Naive thymus-derived CD4-positive, alpha-beta T cell (primary cell): ENCODE measurements at regions of chr19 and their contacts with region 1.

Region 1: DNA sequence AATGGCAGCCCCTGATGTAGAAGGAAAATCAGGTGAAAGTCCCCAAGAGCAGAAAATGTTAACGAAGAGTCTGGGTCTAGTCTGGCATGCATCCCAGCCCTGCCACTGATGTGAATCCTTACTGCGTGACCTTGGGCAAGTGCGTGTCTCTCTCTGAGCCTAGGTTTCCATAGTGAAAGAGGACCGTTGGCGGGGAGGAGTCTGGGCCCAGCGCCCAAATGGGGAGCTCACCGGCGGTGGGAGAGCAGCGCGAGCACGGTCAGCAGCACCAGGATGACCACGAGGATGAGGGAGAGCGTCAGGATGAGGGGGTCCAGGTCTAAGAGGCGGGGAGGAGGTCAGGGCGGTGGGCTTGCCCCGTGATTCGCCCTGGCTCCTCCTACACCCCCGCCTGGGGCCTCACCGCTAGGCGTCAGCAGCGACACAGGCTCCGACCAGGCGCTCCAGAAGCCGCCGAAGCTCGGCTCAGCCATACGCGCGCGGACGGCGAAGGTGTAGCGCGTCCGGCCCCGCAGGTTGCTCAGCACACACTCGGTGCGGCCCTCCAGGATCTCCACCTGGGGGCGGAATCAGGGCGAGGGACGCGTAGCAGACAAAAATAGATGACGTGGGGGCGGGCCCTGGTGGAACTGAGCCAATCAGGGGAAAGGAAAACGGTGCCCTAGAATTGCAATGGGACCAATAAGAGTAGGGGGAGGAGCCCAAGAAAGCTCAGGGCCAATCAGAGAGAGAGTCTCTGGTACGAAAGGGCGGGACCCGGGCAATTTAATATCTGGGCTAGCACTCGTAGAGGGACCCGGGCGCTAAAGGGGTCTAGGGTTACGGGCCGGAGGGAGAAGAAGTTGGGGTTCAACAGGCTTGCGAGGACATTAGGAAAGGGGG is 3.2 kb downstream of the EPOR start:
- DNase-seq: peak; percentile 88 to 99 (median 98)
- ATAC-seq: peak; percentile 90
- H3K4me3 ChIP-seq: peak overlapping the region; percentile 69
- H3K4me3 Mint-ChIP-seq: peak overlapping the region; percentile 86 to 99 (median 93)
- H3K27ac ChIP-seq: peak overlapping the region; percentile 86
- H3K27ac Mint-ChIP-seq: peak overlapping the region; percentile 91 to 99 (median 98)
- H3K4me1 ChIP-seq: peaks cover 33 to 44% of the 10 kb centered on the region in 2 donors
- H3K4me1 Mint-ChIP-seq: peaks cover 36 to 65% (median 52%) of the 10 kb centered on the region in 7 donors
- H3K27me3 ChIP-seq: no peaks in the 10 kb centered on the region
- H3K27me3 Mint-ChIP-seq: peaks cover 0 to 35% (median 5%) of the 10 kb centered on the region in 5 donors

Region 2: DNA sequence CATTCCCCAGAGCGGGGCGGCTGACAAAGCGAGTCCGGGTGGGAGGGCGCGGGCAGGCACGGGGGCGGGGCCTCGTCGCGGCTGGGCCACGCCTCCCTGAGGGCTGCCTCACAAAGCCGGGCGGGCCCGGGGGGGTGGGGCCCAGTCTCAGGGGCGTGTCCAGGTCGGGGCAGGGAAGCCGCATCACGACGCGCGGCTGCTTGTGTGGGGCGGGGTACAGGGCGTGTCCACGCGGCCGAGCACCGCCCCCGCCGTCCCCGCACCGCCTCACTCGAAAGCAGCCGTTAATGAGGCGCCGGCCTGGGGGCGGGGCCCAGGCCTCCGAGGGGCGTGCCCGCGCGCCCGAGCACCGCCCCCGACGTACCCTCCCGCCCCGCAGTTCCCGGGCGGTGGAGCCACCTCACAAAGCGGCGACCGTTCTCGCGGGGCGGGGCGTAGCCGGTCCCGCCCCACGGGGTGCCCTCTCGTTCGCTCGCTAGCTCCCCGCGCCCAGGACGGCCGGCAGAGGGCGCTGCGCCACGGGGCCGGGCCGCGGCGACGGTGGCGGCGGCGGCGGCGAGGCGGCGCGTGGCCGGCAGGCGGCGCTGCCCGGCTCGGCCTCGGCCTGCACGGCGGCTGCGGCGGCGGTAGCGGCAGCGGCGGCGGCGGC is 509.8 kb before region 1 on chr19 and contains the start of gene CARM1:
- CTCF ChIA-PET with region 1: no interaction called
- POLR2A ChIA-PET with region 1: no interaction called
- intact Hi-C with region 1: loop called in 1 of 2 experiments (anchors 10 kb)
- DNase-seq: peak; percentile 99 to 100 (median 99)
- ATAC-seq: peak; percentile 92
- H3K4me3 ChIP-seq: peak within 1 kb of the TSS; percentile 67
- H3K4me3 Mint-ChIP-seq: peak within 1 kb of the TSS; percentile 79 to 91 (median 86)
- H3K27ac ChIP-seq: peak within 1 kb of the TSS; percentile 74
- H3K27ac Mint-ChIP-seq: peak within 1 kb of the TSS; percentile 74 to 96 (median 88)
- H3K4me1 ChIP-seq: peaks cover 10 to 14% of the 10 kb centered on the region in 2 donors
- H3K4me1 Mint-ChIP-seq: peaks cover 5 to 33% (median 25%) of the 10 kb centered on the region in 7 donors
- H3K27me3 ChIP-seq: no peaks in the 10 kb centered on the region
- H3K27me3 Mint-ChIP-seq: no peaks in the 10 kb centered on the region
- total RNA-seq, gene CARM1: 21.3 to 43.1 (median 27.2) TPM

Region 3: DNA sequence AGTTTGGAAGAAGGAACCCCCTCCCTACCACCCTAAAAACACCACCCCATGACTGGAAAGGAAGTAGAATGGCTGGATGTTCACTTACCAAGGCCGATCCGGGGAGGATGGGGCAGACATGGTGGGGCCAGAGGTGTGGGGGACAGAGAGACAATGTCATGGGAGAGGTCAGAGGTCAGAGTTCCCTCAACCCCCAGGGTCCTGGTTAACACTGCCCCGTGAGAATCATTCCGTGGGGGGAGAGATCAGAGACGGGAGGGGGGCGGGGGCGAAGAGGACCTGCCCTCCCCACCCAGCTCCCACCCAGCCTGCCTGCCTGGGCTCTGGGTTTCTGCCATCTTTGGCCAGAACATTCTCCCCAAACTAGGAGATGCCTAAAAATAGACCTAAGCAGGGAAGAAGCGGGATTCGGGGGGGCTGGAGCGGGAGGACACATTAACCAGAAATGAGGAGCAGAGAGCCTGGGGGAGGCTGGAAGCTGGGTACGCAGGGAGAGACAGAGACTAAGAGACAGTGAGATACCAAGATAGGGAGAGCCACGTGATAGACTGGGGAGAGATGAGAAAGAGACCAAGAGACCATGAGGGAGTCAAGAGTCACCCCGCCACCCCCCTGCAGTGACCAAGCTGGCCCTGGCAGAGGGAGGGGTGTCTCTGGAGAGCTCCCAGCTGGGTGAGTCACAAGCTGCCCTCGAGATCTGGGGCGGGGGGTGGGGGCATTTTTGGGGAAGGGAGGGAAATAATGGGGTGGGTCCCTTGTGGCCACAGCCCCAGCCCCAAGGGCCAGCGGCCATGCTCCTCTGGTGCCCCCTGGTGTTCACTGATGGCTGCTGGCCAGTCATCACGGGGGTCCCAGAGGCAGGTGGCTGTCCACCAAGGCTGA is 177.5 kb before region 1 on chr19:
- CTCF ChIA-PET with region 1: no interaction called
- POLR2A ChIA-PET with region 1: no interaction called
- intact Hi-C with region 1: no loop called
- DNase-seq: peak in 4 of 9 donors; percentile 7 to 44 (median 21)
- ATAC-seq: peak; percentile 65
- H3K4me3 ChIP-seq: no peak overlapping the region
- H3K4me3 Mint-ChIP-seq: no peak overlapping the region
- H3K27ac ChIP-seq: no peak overlapping the region
- H3K27ac Mint-ChIP-seq: no peak overlapping the region
- H3K4me1 ChIP-seq: no peaks in the 10 kb centered on the region
- H3K4me1 Mint-ChIP-seq: peaks cover 0 to 3% (median 0%) of the 10 kb centered on the region in 7 donors
- H3K27me3 ChIP-seq: no peaks in the 10 kb centered on the region
- H3K27me3 Mint-ChIP-seq: peaks cover 0 to 19% (median 7%) of the 10 kb centered on the region in 5 donors

Region 4: DNA sequence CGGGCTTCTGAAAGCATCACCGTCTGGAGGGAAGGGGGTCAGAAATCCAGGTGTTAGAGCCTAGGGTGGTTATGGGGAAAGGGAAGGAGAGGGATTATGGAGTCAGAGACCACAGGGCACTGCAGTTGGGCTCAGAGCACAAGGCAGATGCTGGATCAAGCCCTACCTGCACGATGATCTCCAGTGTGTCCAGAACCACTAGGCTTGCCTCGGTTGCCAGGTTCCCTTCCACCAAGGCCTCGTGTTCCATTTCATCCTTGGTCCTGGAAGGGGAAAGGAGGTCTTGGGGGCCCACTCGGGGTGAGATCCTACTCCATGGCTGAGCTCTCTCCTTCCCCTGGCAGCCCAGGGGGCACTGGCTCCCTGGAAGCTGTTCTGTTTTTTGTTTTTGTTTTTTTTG is 166.5 kb before region 1 on chr19:
- CTCF ChIA-PET with region 1: no interaction called
- POLR2A ChIA-PET with region 1: no interaction called
- intact Hi-C with region 1: no loop called
- DNase-seq: no peak
- ATAC-seq: no peak
- H3K4me3 ChIP-seq: no peak overlapping the region
- H3K4me3 Mint-ChIP-seq: no peak overlapping the region
- H3K27ac ChIP-seq: no peak overlapping the region
- H3K27ac Mint-ChIP-seq: no peak overlapping the region
- H3K4me1 ChIP-seq: no peaks in the 10 kb centered on the region
- H3K4me1 Mint-ChIP-seq: peaks cover 0 to 2% (median 0%) of the 10 kb centered on the region in 7 donors
- H3K27me3 ChIP-seq: no peaks in the 10 kb centered on the region
- H3K27me3 Mint-ChIP-seq: peaks cover 0 to 4% (median 0%) of the 10 kb centered on the region in 5 donors

Region 5: DNA sequence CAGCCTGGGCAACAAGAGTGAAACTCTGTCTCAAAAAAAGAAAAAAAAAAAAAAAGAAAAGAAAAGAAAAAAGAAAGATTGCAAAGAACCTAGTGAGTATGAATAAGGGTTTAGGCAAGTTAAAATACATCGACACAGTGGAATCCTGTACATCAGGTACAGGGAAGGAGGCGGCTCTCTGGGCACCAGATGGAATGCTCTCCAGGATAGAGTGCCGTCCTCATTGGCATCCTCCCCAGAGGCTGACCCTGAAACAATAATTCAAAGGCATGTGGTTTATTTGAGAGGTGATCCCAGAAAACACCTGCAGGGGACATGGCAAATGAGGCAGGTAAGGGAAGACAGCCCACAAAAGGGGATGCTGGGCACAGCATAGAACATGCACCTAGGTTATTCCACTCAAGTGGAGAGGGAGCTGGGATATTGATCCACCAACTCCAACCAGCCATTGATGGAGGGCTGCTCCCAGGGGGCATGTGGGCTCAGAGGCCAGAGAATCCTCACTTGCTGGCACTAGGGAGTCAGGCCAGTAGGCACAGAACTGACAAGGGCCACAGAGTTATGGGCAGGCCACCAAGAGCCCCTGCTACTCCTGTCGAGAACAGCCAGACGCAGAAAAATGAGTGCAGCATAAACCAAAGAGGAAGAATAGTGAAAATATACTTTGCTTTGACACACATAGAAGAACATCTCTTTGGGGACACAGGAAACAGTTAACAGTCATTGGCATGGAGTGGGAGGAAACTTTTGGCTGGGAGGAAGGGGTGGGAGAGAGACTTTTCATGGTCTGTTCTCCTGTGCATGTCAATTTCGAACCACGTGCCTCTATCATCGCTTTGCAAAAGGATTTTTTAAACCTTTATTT is 80.7 kb before region 1 on chr19:
- CTCF ChIA-PET with region 1: no interaction called
- POLR2A ChIA-PET with region 1: no interaction called
- intact Hi-C with region 1: no loop called
- DNase-seq: no peak
- ATAC-seq: no peak
- H3K4me3 ChIP-seq: no peak overlapping the region
- H3K4me3 Mint-ChIP-seq: no peak overlapping the region
- H3K27ac ChIP-seq: no peak overlapping the region
- H3K27ac Mint-ChIP-seq: no peak overlapping the region
- H3K4me1 ChIP-seq: no peaks in the 10 kb centered on the region
- H3K4me1 Mint-ChIP-seq: no peaks in the 10 kb centered on the region
- H3K27me3 ChIP-seq: no peaks in the 10 kb centered on the region
- H3K27me3 Mint-ChIP-seq: peaks cover 0 to 39% (median 9%) of the 10 kb centered on the region in 5 donors

Region 6: DNA sequence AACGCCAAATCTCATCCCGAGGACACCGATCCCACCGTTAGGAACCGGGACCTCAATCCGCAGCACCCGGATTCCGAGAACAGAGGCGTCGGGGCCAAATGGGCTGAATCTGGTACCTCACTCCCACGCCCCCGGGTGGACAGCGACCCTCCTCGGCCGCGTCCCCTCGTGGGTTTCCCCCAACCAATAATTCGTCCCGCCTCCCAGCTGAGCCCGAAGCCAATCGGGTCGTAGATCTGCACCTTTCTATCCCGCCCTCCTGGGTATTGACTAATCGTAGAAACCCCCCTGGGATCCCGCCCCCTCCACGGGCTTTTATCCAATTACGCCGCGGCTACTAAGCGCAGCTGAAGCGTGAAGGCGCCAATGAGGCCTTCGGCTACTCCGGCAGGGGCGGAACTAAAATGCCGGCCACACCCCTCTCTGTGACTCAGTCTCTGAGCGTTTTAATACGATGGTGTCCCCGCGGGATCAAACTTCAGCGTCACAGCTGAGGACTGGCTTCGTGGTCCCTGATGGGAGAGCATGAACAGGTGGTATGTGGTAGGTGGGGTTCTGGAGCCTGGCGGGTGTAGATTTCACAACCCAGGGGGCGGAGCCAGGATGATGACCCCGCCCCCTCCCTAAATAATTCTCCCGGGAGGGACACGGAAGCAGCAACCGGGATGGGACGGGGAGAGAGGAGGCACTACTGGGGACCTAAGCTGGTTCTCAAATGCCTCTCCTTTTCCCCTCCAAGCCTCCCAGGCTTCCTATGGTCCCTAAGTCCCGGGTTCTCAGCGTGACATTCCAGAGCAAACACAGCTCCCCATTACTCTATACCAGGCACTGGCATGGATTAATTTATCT is 34.6 kb before region 1 on chr19 and contains the starts of genes CCDC159 and TMEM205:
- CTCF ChIA-PET with region 1: interaction called, 13 read pairs
- POLR2A ChIA-PET with region 1: interaction called, 36 read pairs
- intact Hi-C with region 1: loop called in 1 of 2 experiments (anchors 1 kb)
- DNase-seq: peak; percentile 82 to 99 (median 98)
- ATAC-seq: peak; percentile 98
- H3K4me3 ChIP-seq: peak within 1 kb of the TSS; percentile 75
- H3K4me3 Mint-ChIP-seq: peak within 1 kb of the TSS; percentile 92 to 100 (median 98)
- H3K27ac ChIP-seq: peak within 1 kb of the TSS; percentile 83
- H3K27ac Mint-ChIP-seq: peak within 1 kb of the TSS; percentile 89 to 98 (median 96)
- H3K4me1 ChIP-seq: peaks cover 13 to 14% of the 10 kb centered on the region in 2 donors
- H3K4me1 Mint-ChIP-seq: peaks cover 22 to 39% (median 29%) of the 10 kb centered on the region in 7 donors
- H3K27me3 ChIP-seq: no peaks in the 10 kb centered on the region
- H3K27me3 Mint-ChIP-seq: no peaks in the 10 kb centered on the region
- total RNA-seq, gene CCDC159: 17.6 to 87.4 (median 84.3) TPM
- total RNA-seq, gene TMEM205: 19.5 to 36.7 (median 29.5) TPM

Region 7: DNA sequence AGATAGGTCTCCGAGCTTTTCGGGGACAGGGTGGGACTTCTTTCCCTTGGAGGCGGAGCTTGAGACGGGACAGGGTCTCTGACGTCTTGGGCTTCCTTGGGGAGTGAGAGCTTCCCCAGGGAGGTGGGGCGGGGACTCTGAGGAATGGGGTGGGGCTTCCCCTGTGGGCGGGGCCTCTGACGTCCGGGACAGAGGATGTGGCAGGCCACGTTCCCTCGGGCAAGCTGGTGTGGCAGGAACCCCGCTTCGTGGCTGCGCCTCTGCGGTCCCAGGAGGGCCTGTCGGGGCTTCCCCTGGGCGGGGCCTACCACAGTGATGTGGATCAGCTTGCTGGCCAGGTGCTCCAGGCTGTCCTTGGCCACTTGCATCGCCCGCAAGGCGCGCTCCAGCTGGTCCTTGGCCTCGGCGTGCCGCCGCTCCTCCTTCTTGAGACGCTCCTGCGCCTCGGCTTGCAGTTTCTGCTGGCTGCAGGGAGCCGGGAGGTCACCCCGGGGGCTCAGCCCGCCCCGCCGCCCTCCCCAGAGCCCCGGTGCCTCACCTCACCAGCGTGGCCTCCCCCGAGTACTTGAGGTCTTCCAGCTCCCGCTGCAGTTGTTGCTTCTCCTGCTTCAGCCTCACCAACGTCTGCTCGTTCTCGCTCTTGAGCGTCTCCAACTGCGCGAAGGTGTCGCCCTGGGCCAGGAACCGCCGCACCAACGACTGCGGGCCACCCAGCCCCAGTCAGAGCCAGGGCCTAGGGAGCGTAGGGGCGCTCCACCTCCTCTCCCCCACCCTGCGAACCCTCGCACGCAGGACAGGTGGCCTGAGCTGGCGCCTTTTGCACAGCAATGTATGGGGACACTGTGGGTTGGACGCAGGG is 41.5 kb after region 1 on chr19:
- CTCF ChIA-PET with region 1: interaction called, 5 read pairs
- POLR2A ChIA-PET with region 1: interaction called, 31 read pairs
- intact Hi-C with region 1: loop called (anchors 1 to 2 kb)
- DNase-seq: peak; percentile 27 to 72 (median 39)
- ATAC-seq: peak; percentile 81
- H3K4me3 ChIP-seq: peak overlapping the region; percentile 47
- H3K4me3 Mint-ChIP-seq: peak overlapping the region; percentile 74 to 85 (median 81)
- H3K27ac ChIP-seq: no peak overlapping the region
- H3K27ac Mint-ChIP-seq: no peak overlapping the region
- H3K4me1 ChIP-seq: peaks cover 14 to 40% of the 10 kb centered on the region in 2 donors
- H3K4me1 Mint-ChIP-seq: peaks cover 27 to 45% (median 37%) of the 10 kb centered on the region in 7 donors
- H3K27me3 ChIP-seq: peaks cover 9 to 36% of the 10 kb centered on the region in 2 donors
- H3K27me3 Mint-ChIP-seq: peaks cover 34 to 64% (median 48%) of the 10 kb centered on the region in 5 donors

Region 8: GRCh38 chr19:11482384-11483050 is 101.6 kb after region 1 on chr19:
- CTCF ChIA-PET with region 1: interaction called, 9 read pairs
- POLR2A ChIA-PET with region 1: interaction called, 7 read pairs
- intact Hi-C with region 1: loop called (anchors 1 to 2 kb)
- DNase-seq: peak; percentile 63 to 92 (median 76)
- ATAC-seq: peak; percentile 92
- H3K4me3 ChIP-seq: peak overlapping the region; percentile 19
- H3K4me3 Mint-ChIP-seq: peak overlapping the region in 9 of 10 donors; percentile 52 to 83 (median 71)
- H3K27ac ChIP-seq: no peak overlapping the region
- H3K27ac Mint-ChIP-seq: peak overlapping the region in 2 of 9 donors; percentile 21 to 85
- H3K4me1 ChIP-seq: peaks cover 15 to 20% of the 10 kb centered on the region in 2 donors
- H3K4me1 Mint-ChIP-seq: peaks cover 12 to 24% (median 21%) of the 10 kb centered on the region in 7 donors
- H3K27me3 ChIP-seq: peaks cover 8 to 17% of the 10 kb centered on the region in 2 donors
- H3K27me3 Mint-ChIP-seq: peaks cover 25 to 37% (median 33%) of the 10 kb centered on the region in 5 donors

Region 9: DNA sequence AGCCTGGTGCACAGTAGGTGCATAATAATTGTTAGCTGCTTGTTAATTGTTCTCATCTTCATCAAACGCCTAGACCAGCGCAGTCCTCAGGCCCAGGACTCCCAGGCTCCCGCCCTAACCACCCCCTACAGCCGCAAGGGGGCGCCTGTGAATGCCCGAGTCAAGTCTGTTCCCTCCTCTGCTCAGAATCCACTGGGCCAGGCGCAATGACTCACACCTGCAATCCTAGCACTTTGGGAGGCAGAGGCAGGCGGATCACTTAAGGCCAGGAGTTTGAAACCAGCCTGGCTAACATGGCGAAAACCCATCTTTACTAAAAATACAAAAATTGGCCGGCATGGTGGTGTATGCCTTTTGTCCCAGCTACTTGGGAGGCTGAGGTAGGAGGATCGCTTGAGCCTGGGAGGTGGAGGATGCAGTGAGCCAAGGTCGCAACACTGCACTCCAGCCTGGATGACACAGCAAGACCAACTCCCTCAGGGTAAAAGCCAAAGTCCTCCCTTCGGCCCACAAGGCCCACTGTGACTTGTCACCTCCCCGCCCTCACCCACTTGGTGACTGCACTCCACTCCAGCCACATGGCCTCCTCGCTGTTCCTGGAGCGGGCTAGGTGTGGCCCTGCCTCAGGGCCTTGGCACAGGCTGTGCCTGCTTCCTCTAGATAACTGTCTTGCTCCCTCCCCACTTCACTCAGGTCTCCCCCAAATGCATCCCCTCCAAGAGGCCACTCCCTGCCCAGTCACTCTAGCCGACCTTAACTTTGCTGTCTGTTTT is 115.7 kb after region 1 on chr19:
- CTCF ChIA-PET with region 1: no interaction called
- POLR2A ChIA-PET with region 1: no interaction called
- intact Hi-C with region 1: no loop called
- DNase-seq: peak; percentile 27 to 64 (median 49)
- ATAC-seq: peak; percentile 73
- H3K4me3 ChIP-seq: no peak overlapping the region
- H3K4me3 Mint-ChIP-seq: no peak overlapping the region
- H3K27ac ChIP-seq: no peak overlapping the region
- H3K27ac Mint-ChIP-seq: peak overlapping the region in 1 of 9 donors; percentile 51
- H3K4me1 ChIP-seq: no peaks in the 10 kb centered on the region
- H3K4me1 Mint-ChIP-seq: peaks cover 0 to 11% (median 0%) of the 10 kb centered on the region in 7 donors
- H3K27me3 ChIP-seq: no peaks in the 10 kb centered on the region
- H3K27me3 Mint-ChIP-seq: no peaks in the 10 kb centered on the region

Region 10: GRCh38 chr19:11597202-11598102 is 216.6 kb after region 1 on chr19 and contains the start of gene ZNF627:
- CTCF ChIA-PET with region 1: interaction called, 4 read pairs
- POLR2A ChIA-PET with region 1: no interaction called
- intact Hi-C with region 1: loop called in 1 of 2 experiments (anchors 1 kb)
- DNase-seq: peak; percentile 87 to 98 (median 96)
- ATAC-seq: peak; percentile 100
- H3K4me3 ChIP-seq: peak within 1 kb of the TSS; percentile 85
- H3K4me3 Mint-ChIP-seq: peak within 1 kb of the TSS; percentile 87 to 96 (median 92)
- H3K27ac ChIP-seq: peak within 1 kb of the TSS; percentile 88
- H3K27ac Mint-ChIP-seq: peak within 1 kb of the TSS; percentile 68 to 95 (median 91)
- H3K4me1 ChIP-seq: peaks cover 3 to 14% of the 10 kb centered on the region in 2 donors
- H3K4me1 Mint-ChIP-seq: peaks cover 18 to 43% (median 27%) of the 10 kb centered on the region in 7 donors
- H3K27me3 ChIP-seq: no peaks in the 10 kb centered on the region
- H3K27me3 Mint-ChIP-seq: no peaks in the 10 kb centered on the region
- total RNA-seq, gene ZNF627: 5.2 to 15.4 (median 12.3) TPM